ENCODE measurements at regions of chr18 and their contacts with region 1.

Region 1: GRCh38 chr18:23861805-23862470 is 152.6 kb upstream of the TTC39C start:
- DNase-seq: no peak
- ATAC-seq: no peak
- H3K4me3 Mint-ChIP-seq: no peak overlapping the region
- H3K27ac Mint-ChIP-seq: peak overlapping the region; percentile 79
- H3K4me1 Mint-ChIP-seq: peaks cover 63% of the 10 kb centered on the region
- H3K27me3 Mint-ChIP-seq: no peaks in the 10 kb centered on the region

Region 2: GRCh38 chr18:23828426-23828825 is 33.5 kb before region 1 on chr18:
- CTCF ChIA-PET with region 1: interaction called, 12 read pairs
- POLR2A ChIA-PET with region 1: interaction called, 6 read pairs
- DNase-seq: peak; percentile 80
- ATAC-seq: peak; percentile 98
- H3K4me3 Mint-ChIP-seq: no peak overlapping the region
- H3K27ac Mint-ChIP-seq: peak overlapping the region; percentile 47
- H3K4me1 Mint-ChIP-seq: peaks cover 44% of the 10 kb centered on the region
- H3K27me3 Mint-ChIP-seq: peaks cover under 1% of the 10 kb centered on the region

Region 3: DNA sequence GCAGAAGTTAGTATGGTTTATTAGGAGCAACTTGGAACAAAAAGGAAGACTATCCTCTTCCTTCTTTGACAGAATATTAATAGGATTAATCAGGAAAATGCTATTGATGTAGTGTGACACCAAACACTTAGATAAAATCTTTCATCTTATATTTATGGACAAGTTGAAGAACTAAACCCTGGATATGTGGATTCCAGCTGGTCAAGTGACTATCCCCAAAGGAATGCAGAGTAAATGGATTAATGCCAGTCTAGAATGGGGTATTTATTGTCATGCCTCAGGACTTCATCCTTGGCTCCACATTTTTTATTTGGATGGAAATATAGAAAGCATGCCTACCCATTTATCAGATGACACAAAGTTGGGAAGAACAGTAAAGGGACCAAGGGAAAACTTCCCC is 28.7 kb after region 1 on chr18:
- CTCF ChIA-PET with region 1: no interaction called
- POLR2A ChIA-PET with region 1: no interaction called
- DNase-seq: no peak
- ATAC-seq: no peak
- H3K4me3 Mint-ChIP-seq: no peak overlapping the region
- H3K27ac Mint-ChIP-seq: no peak overlapping the region
- H3K4me1 Mint-ChIP-seq: peaks cover 16% of the 10 kb centered on the region
- H3K27me3 Mint-ChIP-seq: peaks cover 2% of the 10 kb centered on the region

Region 4: DNA sequence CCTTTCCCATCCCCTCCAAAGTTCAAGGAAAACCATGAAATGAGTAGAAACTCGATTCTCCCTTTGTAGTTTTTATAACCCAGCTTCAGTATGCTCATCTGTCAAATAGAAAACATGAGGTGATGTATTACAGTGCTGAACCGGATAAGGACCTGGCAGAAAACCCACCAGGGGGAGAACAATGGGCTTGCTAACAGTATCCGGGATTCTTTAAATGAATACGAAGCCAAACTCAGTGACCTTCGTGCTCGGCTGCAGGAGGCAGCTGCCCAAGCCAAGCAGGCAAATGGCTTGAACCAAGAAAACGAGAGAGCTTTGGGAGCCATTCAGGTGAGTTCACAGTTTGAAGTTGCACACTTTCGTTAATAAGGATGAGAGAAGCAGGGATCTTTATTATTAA is 39.1 kb after region 1 on chr18:
- CTCF ChIA-PET with region 1: no interaction called
- POLR2A ChIA-PET with region 1: no interaction called
- DNase-seq: peak; percentile 28
- ATAC-seq: peak; percentile 51
- H3K4me3 Mint-ChIP-seq: no peak overlapping the region
- H3K27ac Mint-ChIP-seq: no peak overlapping the region
- H3K4me1 Mint-ChIP-seq: peaks cover 8% of the 10 kb centered on the region
- H3K27me3 Mint-ChIP-seq: peaks cover 11% of the 10 kb centered on the region